Left lung (tissue), 14 donors: ENCODE measurements at regions of chrX and their contacts with region 1.

Region 1: GRCh38 chrX:120499301-120500072 is 30.4 kb upstream of the LAMP2 start:
- DNase-seq: peak in 1 of 4 donors; percentile 20
- ATAC-seq: no peak
- H3K4me3 ChIP-seq: no peak overlapping the region
- H3K27ac ChIP-seq: no peak overlapping the region
- H3K4me1 ChIP-seq: no peaks in the 10 kb centered on the region
- H3K27me3 ChIP-seq: no peaks in the 10 kb centered on the region
- CTCF ChIP-seq: no peak

Region 2: DNA sequence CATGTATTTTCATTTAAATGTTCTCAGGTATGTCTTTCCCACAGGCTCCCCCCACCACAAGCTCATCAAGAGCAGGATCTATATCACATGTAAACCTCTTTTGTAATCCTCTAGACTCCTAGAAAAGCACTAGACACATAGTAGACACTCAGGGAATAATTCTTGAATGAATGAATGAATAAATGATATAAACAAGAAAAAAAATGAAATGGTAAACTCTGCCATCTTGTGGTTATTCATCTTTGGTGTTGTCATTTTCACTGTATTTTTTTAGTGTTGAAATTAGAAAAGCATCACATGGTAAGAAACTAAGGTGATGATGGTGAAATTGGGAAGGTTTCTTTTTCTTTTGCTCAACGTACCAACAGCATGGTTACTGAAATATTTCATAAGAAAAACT is 164.6 kb after region 1 on chrX:
- intact Hi-C with region 1: loop called in 1 of 2 experiments (anchors 10 kb)
- DNase-seq: peak in 1 of 4 donors; percentile 1
- ATAC-seq: no peak
- H3K4me3 ChIP-seq: no peak overlapping the region
- H3K27ac ChIP-seq: no peak overlapping the region
- H3K4me1 ChIP-seq: no peaks in the 10 kb centered on the region
- H3K27me3 ChIP-seq: no peaks in the 10 kb centered on the region
- CTCF ChIP-seq: peak in 1 of 2 donors; percentile 9